OCI-LY7 (cell line): ENCODE measurements at regions of chr1 and their contacts with region 1.

Region 1: DNA sequence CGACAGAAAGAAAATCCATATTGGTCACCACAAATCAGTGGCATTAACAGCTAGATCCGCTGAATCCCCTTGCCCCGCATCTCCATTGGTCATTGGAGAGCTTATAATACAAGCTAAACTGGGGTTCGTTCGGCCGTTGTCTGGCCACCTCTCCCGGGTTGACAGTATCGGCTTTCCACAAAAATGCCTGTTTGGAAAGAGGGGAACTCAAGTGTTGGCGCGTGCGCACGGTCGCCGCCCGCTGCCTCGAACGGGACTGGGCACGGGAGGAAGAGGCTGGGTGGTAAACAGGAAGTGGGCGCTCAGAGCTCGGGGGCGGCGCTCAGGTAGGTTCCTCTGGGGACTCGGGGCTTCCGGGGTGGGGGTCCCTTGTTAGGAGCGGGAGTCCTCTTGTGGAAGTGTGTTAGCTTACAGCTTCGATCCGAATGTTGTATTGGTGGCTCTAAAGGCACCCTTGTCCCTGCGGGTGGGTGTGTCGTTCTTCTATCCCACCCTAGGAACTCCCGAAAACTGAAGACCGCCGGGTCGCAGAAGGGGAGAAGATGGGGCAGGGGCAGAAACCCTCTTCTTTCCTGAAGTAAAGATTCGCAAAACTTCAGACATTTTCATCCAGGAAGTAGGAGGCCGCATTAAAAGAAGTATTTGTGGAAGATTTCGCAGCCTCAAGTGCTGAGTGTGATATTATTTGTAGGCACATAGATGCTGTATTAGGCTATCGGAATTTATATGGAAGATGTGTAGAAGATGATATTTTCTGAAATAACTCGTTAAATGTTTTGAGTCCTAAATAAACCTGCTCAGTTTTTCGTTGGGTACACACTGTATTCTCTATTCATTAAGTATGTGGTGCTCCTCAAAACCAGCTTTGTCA is 962 bp downstream of the BROX start:
- DNase-seq: peak; percentile 97
- H3K4me3 ChIP-seq: peak overlapping the region; percentile 98
- H3K27ac ChIP-seq: peak overlapping the region; percentile 95
- H3K4me1 ChIP-seq: peaks cover 17% of the 10 kb centered on the region
- CTCF ChIP-seq: peak; percentile 58

Region 2: GRCh38 chr1:221741711-221742554 is 971.4 kb before region 1 on chr1 and contains the start of gene DUSP10:
- CTCF ChIA-PET with region 1: no interaction called
- POLR2A ChIA-PET with region 1: interaction called, 3 read pairs
- intact Hi-C with region 1: loop called (anchors 5 kb)
- DNase-seq: peak; percentile 98
- H3K4me3 ChIP-seq: peak within 1 kb of the TSS; percentile 71
- H3K27ac ChIP-seq: peak within 1 kb of the TSS; percentile 67
- H3K4me1 ChIP-seq: peaks cover 17% of the 10 kb centered on the region
- CTCF ChIP-seq: no peak
- total RNA-seq, gene DUSP10: 2.0 and 4.4 TPM in 2 replicates

Region 3: DNA sequence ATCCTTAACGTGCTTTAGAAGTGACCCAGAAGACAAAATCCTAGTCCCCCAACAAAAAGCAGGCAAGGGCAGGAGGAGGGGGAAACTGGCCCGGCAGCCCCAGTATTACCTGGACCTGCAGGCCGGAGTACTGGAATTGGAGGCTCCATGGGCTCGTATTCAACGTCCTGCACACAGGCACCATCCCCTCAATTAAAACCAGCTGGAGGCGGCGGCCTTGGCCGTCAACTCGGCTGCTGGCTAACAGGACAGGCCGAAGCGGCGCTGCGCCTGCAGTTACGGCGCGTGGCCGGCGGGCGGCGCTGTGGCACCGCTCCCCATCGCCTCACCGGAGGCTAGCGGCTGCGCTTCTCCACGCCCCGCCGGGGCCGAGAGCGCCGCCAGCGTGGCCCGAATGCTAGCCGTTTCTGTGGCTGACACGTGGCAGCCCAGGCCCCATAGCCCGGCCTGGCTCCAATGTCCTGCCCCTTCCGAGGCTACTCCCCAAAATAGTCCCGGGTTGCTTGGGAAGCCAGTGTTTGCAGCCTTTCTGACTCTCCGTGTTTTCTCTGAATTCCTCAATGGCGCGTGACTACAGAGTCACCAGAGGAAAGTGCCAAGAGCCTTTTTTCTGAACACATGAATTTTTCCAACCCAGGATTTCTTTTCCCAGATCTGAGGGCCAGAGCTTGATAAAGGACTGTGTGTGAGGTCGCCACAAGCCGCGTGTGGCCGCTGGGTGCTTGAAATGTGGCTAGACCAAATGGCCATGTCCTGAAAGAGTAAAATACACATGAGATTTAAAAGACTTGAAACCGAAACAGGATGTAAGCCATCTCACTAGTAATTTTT is 247.9 kb before region 1 on chr1:
- CTCF ChIA-PET with region 1: no interaction called
- POLR2A ChIA-PET with region 1: no interaction called
- intact Hi-C with region 1: loop called (anchors 10 kb)
- DNase-seq: peak; percentile 81
- H3K4me3 ChIP-seq: peak overlapping the region; percentile 33
- H3K27ac ChIP-seq: no peak overlapping the region
- H3K4me1 ChIP-seq: peaks cover 5% of the 10 kb centered on the region
- CTCF ChIP-seq: peak; percentile 95

Region 4: DNA sequence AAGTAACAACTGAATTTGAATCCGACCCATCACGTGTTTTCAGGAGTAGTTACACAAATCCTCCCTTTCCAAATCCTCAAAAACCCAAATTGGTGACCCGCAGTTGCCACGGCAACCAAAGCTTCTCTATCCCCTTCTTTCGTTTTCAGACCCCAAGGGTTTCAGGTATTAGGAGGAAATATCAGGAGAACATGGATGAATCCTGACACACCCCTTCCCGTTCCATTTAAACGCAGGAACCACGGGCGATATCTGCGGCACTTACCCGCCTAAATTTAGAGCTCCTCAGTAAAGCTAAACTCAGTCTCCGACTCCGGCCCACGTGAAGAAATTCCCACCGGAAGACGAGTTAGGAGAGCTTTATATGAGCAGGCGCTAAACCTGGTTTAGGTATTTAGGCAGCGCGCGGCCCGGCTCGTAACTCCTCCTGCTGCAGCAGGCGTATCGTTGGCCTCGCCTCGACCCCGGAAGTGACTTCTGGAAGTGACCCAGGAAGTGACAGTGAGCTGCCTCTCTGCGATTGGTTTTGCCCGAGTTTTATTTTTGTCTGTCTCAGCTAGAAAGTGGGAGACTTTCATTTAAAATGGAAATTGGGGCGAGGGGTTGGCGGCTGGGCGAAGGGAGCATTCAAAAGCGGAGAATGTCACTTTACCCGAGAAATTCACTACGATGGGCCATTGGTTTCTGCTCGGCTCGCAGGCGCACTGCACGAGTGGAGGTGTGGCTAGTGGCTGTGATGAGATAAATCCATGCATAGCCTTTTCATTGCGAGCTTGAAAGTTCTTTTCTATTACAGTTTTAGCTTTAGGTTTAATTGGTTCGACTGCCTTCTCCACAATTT is 123.6 kb before region 1 on chr1 and contains the start of gene TAF1A:
- CTCF ChIA-PET with region 1: no interaction called
- POLR2A ChIA-PET with region 1: interaction called, 13 read pairs
- intact Hi-C with region 1: no loop called
- DNase-seq: peak; percentile 88
- H3K4me3 ChIP-seq: peak within 1 kb of the TSS; percentile 80
- H3K27ac ChIP-seq: peak within 1 kb of the TSS; percentile 43
- H3K4me1 ChIP-seq: peaks cover 20% of the 10 kb centered on the region
- CTCF ChIP-seq: no peak
- total RNA-seq, gene TAF1A: 10.9 and 13.3 TPM in 2 replicates

Region 5: GRCh38 chr1:222643938-222644635 is 69.2 kb before region 1 on chr1:
- CTCF ChIA-PET with region 1: no interaction called
- POLR2A ChIA-PET with region 1: interaction called, 6 read pairs
- intact Hi-C with region 1: loop called (anchors 1 kb)
- DNase-seq: peak; percentile 96
- H3K4me3 ChIP-seq: peak overlapping the region; percentile 87
- H3K27ac ChIP-seq: peak overlapping the region; percentile 46
- H3K4me1 ChIP-seq: peaks cover 15% of the 10 kb centered on the region
- CTCF ChIP-seq: no peak

Region 6: DNA sequence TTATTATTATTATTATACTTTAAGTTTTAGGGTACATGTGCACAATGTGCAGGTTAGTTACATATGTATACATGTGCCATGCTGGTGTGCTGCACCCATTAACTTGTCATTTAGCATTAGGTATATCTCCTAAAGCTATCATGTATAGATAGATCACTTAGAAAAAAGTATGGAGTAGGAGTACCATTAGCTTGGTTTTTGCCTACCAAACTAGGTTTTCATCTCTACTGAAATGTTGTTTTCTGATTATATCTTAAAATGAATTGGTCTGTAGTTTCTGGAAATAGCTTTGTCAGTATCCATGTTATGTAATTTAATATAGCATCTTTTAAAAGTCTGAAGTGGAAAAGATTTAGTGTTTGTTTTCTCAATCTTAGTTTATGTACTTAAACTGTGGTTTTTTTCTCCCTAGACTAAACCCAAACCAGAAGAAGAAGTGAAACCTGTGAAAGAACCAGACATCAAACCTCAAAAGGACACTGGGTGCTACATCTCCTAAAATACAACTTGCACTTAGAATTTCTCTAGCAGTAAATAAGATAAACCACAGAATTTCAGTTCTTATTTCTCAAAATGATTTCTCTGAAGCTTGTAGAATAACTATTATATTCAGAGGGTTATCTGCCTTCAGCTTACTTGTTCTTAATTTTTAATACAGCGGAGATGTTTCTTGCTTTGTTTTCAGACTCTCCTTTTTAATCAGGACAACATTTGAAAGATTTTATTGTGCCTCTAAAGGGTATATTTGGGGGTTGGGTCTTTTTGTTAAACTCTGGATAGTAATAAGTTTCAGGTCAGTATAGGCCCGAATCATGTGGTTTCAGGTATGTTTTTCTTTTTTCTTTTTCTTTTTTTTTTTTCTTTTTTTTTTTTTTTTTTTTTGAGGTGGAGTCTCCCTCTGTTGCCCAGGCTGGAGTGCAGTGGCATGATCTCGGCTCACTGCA is 19.2 kb after region 1 on chr1:
- CTCF ChIA-PET with region 1: no interaction called
- POLR2A ChIA-PET with region 1: interaction called, 9 read pairs
- intact Hi-C with region 1: loop called (anchors 2 kb)
- DNase-seq: peak; percentile 80
- H3K4me3 ChIP-seq: peak overlapping the region; percentile 39
- H3K27ac ChIP-seq: peak overlapping the region; percentile 80
- H3K4me1 ChIP-seq: peaks cover 35% of the 10 kb centered on the region
- CTCF ChIP-seq: no peak

Region 7: DNA sequence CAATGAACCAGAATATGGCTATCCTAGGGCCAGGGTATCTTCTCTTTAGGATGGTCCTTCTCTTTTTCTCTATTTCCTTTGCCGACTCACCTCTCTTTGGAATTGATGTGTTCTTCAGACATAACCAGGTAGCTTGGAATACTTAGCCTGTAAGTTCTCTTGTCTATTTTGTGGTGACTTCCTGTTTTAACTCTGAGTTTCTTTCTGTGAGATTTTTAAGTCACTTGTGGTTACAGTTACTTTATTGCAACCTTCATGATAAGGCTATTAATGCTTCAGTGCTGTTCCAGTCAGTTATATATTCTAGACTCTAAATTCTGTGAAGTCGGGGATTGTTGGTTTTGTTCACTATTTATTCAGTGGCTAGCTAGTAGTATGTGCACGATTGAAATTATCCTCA is 147.7 kb after region 1 on chr1:
- CTCF ChIA-PET with region 1: no interaction called
- POLR2A ChIA-PET with region 1: no interaction called
- intact Hi-C with region 1: no loop called
- DNase-seq: no peak
- H3K4me3 ChIP-seq: no peak overlapping the region
- H3K27ac ChIP-seq: no peak overlapping the region
- H3K4me1 ChIP-seq: no peaks in the 10 kb centered on the region
- CTCF ChIP-seq: no peak